Activated T-helper 2 cell treated with anti-CD3 and anti-CD28 coated beads, Interferon-gamma antibody, Interleukin-2, Interleukin-4, amounts not matched to agents 10 μg/mL and 5 μg/mL and 100 μg/mL, durations not matched to agents 14 hours and 24 hours and 36 hours (primary cell): ENCODE measurements at regions of chr14 and their contacts with region 1.

Region 1: GRCh38 chr14:69685716-69686115 is 74.3 kb downstream of the SUSD6 start:
- DNase-seq: no peak
- H3K4me3 Mint-ChIP-seq: peak overlapping the region; percentile 9
- H3K27ac Mint-ChIP-seq: peak overlapping the region; percentile 95
- H3K4me1 Mint-ChIP-seq: peaks cover 78% of the 10 kb centered on the region
- H3K27me3 Mint-ChIP-seq: no peaks in the 10 kb centered on the region

Region 2: DNA sequence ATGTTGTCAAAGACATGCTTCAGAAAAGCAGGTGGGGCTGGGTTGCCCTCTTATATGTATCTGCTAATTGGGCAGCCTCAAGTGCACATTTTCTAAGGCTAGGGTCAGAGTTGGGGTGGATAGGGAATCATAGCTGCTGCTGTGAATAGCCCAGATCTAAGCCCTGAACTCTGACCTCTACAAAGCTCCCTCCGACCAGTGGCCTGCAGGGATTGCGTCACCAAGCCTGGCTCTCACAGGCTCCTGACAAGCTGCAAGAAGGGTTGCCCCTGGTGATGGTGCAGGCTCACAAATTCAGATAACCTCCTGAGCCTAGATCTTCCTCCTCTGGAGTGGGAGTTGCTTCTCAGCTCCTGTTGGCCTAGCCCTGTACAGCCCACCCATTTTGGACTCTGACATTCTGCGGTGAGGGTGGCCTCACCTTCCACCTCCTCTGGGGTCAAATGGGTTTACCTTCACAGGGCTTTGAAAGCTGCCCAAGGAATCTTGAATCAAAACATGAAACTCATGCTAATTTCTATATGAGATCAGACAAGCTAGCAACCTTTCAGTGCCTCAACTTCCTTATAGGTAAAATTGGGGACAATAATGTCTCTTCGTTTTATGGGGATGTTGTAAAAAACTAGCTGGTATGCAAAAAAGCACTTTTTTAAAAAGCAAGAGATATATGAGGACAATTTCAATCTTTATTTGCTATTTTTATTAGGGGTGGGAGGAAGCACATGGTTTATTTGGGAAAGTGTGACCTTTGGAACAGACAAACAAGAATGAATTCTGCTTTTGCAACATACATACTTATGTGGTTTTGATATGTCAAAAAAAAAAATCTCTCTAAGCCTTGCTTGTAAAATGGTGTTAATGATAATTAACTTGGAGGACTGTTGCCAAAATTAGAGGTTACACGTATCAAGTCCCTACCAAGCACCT is 79.2 kb before region 1 on chr14:
- intact Hi-C with region 1: no loop called
- DNase-seq: no peak
- H3K4me3 Mint-ChIP-seq: no peak overlapping the region
- H3K27ac Mint-ChIP-seq: no peak overlapping the region
- H3K4me1 Mint-ChIP-seq: peaks cover 27% of the 10 kb centered on the region
- H3K27me3 Mint-ChIP-seq: no peaks in the 10 kb centered on the region

Region 3: GRCh38 chr14:69619012-69619411 is 66.7 kb before region 1 on chr14:
- intact Hi-C with region 1: loop called (anchors 2 kb)
- DNase-seq: no peak
- H3K4me3 Mint-ChIP-seq: peak overlapping the region; percentile 56
- H3K27ac Mint-ChIP-seq: peak overlapping the region; percentile 86
- H3K4me1 Mint-ChIP-seq: peaks cover 86% of the 10 kb centered on the region
- H3K27me3 Mint-ChIP-seq: no peaks in the 10 kb centered on the region

Region 4: GRCh38 chr14:69625299-69626131 is 60.2 kb before region 1 on chr14:
- intact Hi-C with region 1: loop called (anchors 1 kb)
- DNase-seq: peak; percentile 72
- H3K4me3 Mint-ChIP-seq: peak overlapping the region; percentile 69
- H3K27ac Mint-ChIP-seq: peak overlapping the region; percentile 89
- H3K4me1 Mint-ChIP-seq: peaks cover 76% of the 10 kb centered on the region
- H3K27me3 Mint-ChIP-seq: no peaks in the 10 kb centered on the region

Region 5: DNA sequence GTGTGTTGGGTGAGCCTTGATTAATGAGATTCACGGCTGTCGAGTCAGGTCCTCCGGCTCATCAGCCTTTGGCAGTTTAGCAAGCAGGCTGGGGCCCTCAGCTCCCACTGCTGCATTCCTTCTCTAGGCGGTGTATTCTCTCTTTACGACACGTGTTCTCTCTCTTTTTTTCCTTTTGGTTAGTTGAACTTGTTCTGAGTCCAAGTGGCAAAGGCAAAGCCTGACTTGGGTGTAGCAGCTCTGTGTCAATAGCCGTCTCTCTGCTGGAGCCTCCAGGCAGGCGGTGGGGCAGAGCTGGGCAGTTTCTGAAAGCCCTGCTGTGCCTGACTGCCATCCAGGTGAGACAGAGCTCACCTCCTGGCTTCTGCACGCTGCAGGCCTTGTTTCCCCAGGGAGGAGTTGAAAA is 27.8 kb before region 1 on chr14:
- intact Hi-C with region 1: loop called (anchors 1 kb)
- DNase-seq: no peak
- H3K4me3 Mint-ChIP-seq: no peak overlapping the region
- H3K27ac Mint-ChIP-seq: peak overlapping the region; percentile 44
- H3K4me1 Mint-ChIP-seq: peaks cover 72% of the 10 kb centered on the region
- H3K27me3 Mint-ChIP-seq: no peaks in the 10 kb centered on the region

Region 6: DNA sequence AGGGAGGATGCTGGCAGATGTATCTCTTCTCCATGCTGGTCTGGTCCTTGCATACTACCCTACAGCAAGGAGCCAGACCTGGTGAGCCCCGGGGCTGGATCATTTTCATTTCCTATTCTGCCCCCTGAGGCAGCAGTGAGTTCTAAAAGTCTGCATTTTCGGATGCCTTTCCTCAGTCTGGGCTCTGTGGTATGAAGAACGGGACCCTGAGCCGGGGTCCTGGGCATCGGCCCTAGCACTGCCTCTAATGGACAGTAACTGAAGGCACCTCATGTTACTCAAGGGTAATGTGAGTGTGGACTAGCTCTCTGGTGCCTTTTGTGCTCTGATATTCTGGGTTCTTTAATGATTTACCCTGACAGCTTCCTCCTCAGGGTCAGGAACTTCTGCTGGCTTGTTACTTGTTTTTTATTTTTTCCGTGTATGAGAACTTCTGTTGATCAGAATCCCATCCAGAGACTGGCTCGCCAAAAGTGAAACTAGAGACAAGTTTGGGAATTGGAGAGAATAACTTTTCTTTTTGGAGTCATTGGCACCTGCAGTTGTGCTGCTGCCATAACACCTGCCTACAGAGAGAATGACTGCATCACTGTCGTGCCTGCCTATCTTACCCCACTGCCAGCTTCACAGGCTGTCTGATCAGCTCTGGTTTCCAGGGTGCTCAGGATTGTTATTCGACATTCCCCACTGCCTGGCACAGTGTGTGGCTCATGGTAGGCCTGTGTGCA is 12.0 kb before region 1 on chr14:
- intact Hi-C with region 1: loop called (anchors 1 kb)
- DNase-seq: no peak
- H3K4me3 Mint-ChIP-seq: peak overlapping the region; percentile 55
- H3K27ac Mint-ChIP-seq: peak overlapping the region; percentile 97
- H3K4me1 Mint-ChIP-seq: peaks cover 74% of the 10 kb centered on the region
- H3K27me3 Mint-ChIP-seq: no peaks in the 10 kb centered on the region

Region 7: DNA sequence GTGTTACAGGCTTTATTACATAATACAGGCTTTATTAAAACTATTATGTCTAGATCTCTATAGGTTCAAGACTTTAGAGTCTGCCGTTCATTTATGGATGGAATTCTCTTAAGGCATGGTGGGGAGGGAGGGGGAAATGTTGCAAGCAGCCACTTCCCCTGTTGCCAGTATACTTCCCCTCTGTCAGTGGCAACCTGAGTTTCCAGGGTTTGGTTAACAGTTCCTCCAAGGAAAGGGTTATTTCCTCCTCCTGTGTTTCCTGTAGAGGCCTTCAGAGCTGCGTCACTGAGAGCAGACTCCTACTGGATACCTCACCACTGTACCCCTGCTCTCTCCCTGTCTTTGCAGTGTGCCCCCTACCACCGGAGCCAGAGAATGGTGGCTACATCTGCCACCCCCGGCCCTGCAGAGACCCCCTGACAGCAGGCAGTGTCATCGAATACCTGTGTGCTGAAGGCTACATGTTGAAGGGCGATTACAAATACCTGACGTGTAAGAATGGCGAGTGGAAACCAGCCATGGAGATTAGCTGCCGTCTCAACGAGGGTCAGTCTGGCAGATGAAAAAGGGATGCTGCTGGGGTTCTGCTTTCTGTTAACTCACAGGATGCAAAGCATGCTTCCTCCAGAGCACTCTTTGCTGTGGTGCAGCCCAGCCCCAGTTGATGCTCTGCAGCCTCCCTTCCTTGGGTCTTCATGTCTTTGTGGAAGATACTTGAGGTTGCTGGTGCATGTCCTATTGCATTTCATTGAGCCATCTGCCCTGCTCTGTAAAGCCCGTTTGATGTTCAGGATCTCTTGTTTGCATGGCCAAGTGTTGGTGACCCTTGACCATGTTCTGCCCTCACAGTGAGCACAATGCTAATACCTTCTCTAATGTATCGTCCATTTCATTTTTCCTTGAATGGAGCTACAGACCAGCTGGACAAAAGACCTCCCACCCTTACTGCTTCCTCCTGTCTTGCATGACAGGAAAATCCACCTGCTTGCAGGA is 17.6 kb after region 1 on chr14:
- intact Hi-C with region 1: no loop called
- DNase-seq: no peak
- H3K4me3 Mint-ChIP-seq: no peak overlapping the region
- H3K27ac Mint-ChIP-seq: peak overlapping the region; percentile 23
- H3K4me1 Mint-ChIP-seq: peaks cover 70% of the 10 kb centered on the region
- H3K27me3 Mint-ChIP-seq: no peaks in the 10 kb centered on the region